Activated CD4-positive, alpha-beta memory T cell treated with anti-CD3 and anti-CD28 coated beads for 36 hours (primary cell): ENCODE measurements at regions of chr22 and their contacts with region 1.

Region 1: DNA sequence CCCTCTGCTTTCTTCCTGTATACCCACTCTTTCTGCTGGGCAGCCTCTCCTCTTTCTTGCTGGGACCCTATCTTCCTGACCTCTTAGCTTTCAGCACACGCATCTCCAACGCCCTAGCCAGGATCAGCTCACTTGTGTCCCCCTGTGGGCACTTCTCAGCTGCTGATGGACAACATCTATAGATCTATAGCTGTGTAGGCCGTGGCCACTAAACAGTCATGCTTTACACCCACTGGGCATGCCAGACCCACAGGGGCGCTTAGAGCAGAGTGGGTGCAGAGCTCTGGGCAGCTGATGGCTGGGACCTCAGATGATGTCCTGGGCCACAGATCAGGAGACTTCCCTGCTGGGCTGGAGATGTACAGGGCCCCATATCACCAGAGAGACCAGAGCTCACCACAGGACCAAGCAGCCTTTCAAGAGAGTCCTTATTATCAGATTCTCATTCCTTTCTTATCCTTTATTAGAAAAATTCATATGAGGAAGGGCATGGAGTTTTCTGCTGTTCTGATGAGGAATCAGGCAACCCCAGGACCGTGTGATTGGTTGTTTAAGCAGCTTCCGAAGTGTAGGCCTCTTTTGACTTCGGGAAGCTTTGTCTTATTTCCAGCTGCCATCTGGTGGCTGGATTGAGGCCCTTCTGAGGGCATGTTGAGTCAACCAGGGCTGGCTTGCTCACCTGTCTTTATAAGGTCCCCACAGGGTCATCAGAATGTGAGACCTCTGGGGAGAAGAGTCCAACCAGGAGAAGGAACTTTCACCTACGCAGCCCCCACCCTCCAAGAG is 60.5 kb downstream of the OSBP2 start:
- DNase-seq: peak; percentile 77
- H3K4me3 Mint-ChIP-seq: no peak overlapping the region
- H3K27ac Mint-ChIP-seq: no peak overlapping the region
- H3K4me1 Mint-ChIP-seq: no peaks in the 10 kb centered on the region
- H3K27me3 Mint-ChIP-seq: no peaks in the 10 kb centered on the region

Region 2: GRCh38 chr22:30159561-30160353 is 595.4 kb before region 1 on chr22:
- CTCF ChIA-PET with region 1: no interaction called
- POLR2A ChIA-PET with region 1: no interaction called
- intact Hi-C with region 1: no loop called
- DNase-seq: no peak
- H3K4me3 Mint-ChIP-seq: no peak overlapping the region
- H3K27ac Mint-ChIP-seq: peak overlapping the region; percentile 85
- H3K4me1 Mint-ChIP-seq: peaks cover 58% of the 10 kb centered on the region
- H3K27me3 Mint-ChIP-seq: no peaks in the 10 kb centered on the region

Region 3: DNA sequence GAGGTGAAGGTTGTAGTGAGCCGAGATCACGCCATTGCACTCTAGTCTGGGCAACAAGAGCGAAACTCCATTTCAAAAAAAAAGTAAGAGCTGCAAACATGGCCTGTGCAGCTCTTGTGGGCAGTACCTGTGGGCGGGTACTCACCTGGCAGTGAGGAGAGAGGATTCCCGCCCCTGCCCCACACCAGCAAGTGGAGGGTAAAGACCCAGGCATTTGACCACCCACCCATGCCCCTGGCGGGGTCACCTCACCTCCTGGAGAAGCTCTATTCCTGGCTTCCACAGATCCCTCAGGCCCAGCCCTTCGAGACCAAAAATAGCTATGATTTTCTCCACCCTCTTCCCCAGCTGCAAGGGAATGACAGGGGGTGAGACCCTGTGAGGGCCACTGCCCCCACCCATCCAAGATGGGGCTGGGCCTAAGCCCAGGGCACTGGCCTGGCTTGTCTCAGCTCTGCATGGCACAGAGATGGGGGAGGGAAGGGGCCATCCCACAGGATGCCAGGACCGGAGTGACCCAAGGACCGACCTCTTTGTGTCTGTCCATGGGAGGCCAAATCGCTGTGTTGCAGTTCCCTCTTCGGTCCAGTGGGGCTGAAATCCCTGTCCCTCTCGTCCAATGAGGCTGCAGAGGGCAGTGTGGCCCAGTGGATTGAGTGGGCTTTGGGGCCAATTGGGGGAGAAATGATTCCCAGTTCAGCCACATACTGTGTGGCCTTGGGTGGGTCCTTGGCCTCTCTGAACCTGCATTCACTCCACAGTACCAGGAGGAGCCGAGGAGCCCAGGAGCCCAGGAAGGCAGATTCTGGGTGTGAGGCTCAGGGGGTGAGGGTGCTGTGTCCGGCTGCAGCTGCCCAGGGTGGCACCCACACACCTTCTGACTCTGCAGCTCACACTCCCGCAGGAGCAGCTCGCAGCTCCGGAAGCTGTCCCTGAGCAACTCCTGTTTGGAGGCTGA is 223.2 kb before region 1 on chr22:
- CTCF ChIA-PET with region 1: no interaction called
- POLR2A ChIA-PET with region 1: no interaction called
- intact Hi-C with region 1: no loop called
- DNase-seq: no peak
- H3K4me3 Mint-ChIP-seq: no peak overlapping the region
- H3K27ac Mint-ChIP-seq: no peak overlapping the region
- H3K4me1 Mint-ChIP-seq: no peaks in the 10 kb centered on the region
- H3K27me3 Mint-ChIP-seq: peaks cover 2% of the 10 kb centered on the region

Region 4: DNA sequence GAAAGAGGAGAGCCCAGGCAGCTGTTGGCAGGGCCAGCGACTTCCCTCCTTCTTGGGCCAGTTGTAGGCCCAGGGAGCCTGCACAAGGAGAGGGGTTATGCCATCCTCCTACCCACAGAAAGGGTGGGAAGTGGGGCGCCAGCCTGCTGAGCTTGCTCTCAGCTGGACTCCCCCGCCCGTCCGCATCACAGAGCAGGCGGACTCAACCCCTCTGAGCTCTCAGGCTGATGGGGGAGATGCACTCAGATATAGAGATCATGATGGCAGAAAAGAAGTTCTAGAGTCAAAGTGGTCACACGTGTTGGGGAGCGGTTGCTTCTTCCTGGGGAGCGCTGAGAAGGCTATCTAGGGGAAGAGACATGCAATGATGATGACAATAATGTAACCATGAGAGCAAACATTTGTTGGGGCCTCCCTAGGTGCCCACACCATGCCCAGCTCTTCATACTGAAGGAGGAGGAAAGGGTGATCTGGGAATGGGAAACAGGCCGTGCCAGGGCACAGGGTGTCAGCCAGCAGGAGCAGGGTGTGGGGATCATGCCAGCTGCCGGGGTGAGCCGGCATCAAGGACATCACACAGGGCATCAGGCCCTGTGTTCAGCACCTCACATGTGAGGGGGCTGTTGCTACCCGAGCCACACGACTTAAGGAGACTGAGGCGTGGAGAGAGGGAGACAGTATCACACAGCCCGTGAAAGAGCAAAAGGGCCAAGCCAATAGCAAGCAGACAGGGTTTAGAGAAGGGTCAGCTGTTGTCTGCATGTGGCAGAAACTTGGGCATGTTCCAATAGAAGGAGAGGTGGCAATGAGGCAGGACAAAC is 111.9 kb before region 1 on chr22:
- CTCF ChIA-PET with region 1: interaction called, 19 read pairs
- POLR2A ChIA-PET with region 1: no interaction called
- intact Hi-C with region 1: no loop called
- DNase-seq: no peak
- H3K4me3 Mint-ChIP-seq: no peak overlapping the region
- H3K27ac Mint-ChIP-seq: peak overlapping the region; percentile 81
- H3K4me1 Mint-ChIP-seq: peaks cover 21% of the 10 kb centered on the region
- H3K27me3 Mint-ChIP-seq: no peaks in the 10 kb centered on the region

Region 5: GRCh38 chr22:30649430-30650007 is 105.6 kb before region 1 on chr22:
- CTCF ChIA-PET with region 1: interaction called, 19 read pairs
- POLR2A ChIA-PET with region 1: no interaction called
- intact Hi-C with region 1: no loop called
- DNase-seq: peak; percentile 94
- H3K4me3 Mint-ChIP-seq: no peak overlapping the region
- H3K27ac Mint-ChIP-seq: peak overlapping the region; percentile 85
- H3K4me1 Mint-ChIP-seq: peaks cover 31% of the 10 kb centered on the region
- H3K27me3 Mint-ChIP-seq: no peaks in the 10 kb centered on the region

Region 6: DNA sequence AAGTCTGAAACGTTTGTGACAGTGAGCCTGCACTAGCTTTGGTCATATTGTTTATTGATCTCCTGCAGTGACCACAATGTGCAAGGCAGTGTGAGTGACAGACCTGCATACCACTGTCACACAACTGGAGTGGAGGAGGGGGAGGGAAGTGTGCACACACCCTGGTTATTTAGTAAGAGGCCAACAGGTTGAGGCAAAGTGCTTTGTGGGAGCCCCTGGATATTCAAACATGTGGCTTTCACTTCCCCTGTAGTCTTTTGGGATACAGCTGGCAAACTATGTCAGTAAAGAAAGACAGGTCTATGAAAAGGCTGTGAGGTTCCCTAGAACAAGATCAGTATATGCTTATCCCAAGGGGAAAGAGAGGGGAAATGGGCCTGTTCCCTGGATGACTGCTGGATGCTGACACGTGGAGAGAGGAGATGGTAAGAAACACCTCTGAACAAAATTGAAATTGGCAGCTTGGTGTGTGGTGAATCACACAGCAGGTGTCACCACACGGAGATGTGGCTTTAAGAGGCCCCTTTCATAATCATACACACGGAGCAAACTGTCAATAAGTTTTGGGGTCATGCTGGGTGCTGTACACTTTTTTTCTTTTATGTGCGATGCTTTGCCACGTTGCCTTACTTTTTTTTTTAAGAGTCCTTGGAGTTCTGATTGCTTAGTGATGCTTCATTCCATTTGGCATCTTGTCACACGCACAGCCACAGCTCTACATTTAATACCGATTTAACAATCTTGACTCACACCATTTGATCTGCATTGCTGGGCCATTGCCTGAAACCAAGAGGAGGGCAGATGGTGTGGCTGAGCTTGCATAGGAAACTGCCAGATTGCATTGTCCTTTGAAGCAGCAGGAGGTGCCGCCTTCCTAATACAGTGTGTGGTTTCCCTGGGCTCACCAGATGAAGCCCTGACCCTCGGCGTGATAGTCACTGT is 49.2 kb before region 1 on chr22:
- CTCF ChIA-PET with region 1: interaction called, 10 read pairs
- POLR2A ChIA-PET with region 1: interaction called, 3 read pairs
- intact Hi-C with region 1: no loop called
- DNase-seq: peak; percentile 56
- H3K4me3 Mint-ChIP-seq: no peak overlapping the region
- H3K27ac Mint-ChIP-seq: peak overlapping the region; percentile 57
- H3K4me1 Mint-ChIP-seq: peaks cover 23% of the 10 kb centered on the region
- H3K27me3 Mint-ChIP-seq: no peaks in the 10 kb centered on the region

Region 7: GRCh38 chr22:30920407-30920806 is 165.2 kb after region 1 on chr22:
- CTCF ChIA-PET with region 1: interaction called, 10 read pairs
- POLR2A ChIA-PET with region 1: no interaction called
- intact Hi-C with region 1: no loop called
- DNase-seq: peak; percentile 87
- H3K4me3 Mint-ChIP-seq: peak overlapping the region; percentile 40
- H3K27ac Mint-ChIP-seq: peak overlapping the region; percentile 3
- H3K4me1 Mint-ChIP-seq: peaks cover 12% of the 10 kb centered on the region
- H3K27me3 Mint-ChIP-seq: no peaks in the 10 kb centered on the region